AG04449 (cell line): ENCODE measurements at regions of chr19 and their contacts with region 1.

Region 1: GRCh38 chr19:40542202-40542859 is 34.3 kb upstream of the SHKBP1 start:
- DNase-seq: no peak
- H3K4me3 ChIP-seq: no peak overlapping the region
- CTCF ChIP-seq: no peak

Region 2: DNA sequence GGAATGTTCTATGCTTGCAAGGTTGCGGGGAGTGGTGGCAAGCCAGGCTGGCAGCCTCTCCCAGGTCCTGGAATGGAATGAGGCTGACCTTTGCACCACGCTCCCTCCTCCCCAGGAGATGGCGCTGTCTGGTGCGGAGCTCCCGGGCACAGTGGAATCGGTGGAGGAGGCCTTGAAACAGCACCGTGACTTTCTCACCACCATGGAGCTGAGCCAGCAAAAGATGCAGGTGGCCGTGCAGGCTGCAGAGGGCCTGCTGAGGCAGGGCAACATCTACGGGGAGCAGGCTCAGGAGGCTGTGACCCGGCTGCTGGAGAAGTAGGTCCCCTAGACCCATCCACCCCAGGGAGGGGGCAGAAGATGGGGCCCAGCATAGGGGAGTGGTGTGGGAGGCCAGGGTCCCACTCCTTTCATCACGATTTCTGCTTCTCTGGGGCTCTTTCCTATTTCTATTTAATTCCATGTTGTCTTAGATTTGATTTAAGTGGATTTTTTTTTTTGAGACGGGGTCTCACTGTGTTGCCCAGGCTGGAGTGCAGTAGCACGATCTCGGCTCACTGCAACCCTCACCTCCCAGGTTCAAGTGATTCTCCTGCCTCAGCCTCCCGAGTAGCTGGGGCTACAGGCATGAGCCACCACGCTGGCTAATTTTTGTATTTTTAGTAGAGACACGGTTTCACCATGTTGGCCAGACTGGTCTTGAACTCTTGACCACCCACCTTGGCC is 18.8 kb before region 1 on chr19:
- CTCF ChIA-PET with region 1: interaction called, 17 read pairs
- POLR2A ChIA-PET with region 1: no interaction called
- DNase-seq: no peak
- H3K4me3 ChIP-seq: no peak overlapping the region
- CTCF ChIP-seq: peak; percentile 78

Region 3: GRCh38 chr19:40553885-40554857 is 11.8 kb after region 1 on chr19:
- CTCF ChIA-PET with region 1: interaction called, 27 read pairs
- POLR2A ChIA-PET with region 1: no interaction called
- DNase-seq: no peak
- H3K4me3 ChIP-seq: no peak overlapping the region
- CTCF ChIP-seq: no peak

Region 4: GRCh38 chr19:40598121-40598917 is 56.0 kb after region 1 on chr19:
- CTCF ChIA-PET with region 1: interaction called, 89 read pairs
- POLR2A ChIA-PET with region 1: no interaction called
- DNase-seq: no peak
- H3K4me3 ChIP-seq: peak overlapping the region; percentile 65
- CTCF ChIP-seq: peak; percentile 97

Region 5: GRCh38 chr19:40633207-40633606 is 90.9 kb after region 1 on chr19:
- CTCF ChIA-PET with region 1: interaction called, 53 read pairs
- POLR2A ChIA-PET with region 1: no interaction called
- DNase-seq: peak; percentile 26
- H3K4me3 ChIP-seq: no peak overlapping the region
- CTCF ChIP-seq: no peak

Region 6: GRCh38 chr19:40662921-40663694 is 120.8 kb after region 1 on chr19:
- CTCF ChIA-PET with region 1: no interaction called
- POLR2A ChIA-PET with region 1: no interaction called
- DNase-seq: no peak
- H3K4me3 ChIP-seq: peak overlapping the region; percentile 68
- CTCF ChIP-seq: peak; percentile 94